Activated B cell treated with CpG ODN at 0.5 μM for 24 hours (primary cell): ENCODE measurements at regions of chrX and their contacts with region 1.

Region 1: GRCh38 chrX:48957827-48958634 is 624 bp upstream of the OTUD5 start:
- DNase-seq: peak; percentile 81
- ATAC-seq: peak; percentile 84
- H3K4me3 Mint-ChIP-seq: peak overlapping the region; percentile 98
- H3K27ac Mint-ChIP-seq: peak overlapping the region; percentile 100
- H3K4me1 Mint-ChIP-seq: peaks cover 69% of the 10 kb centered on the region
- H3K27me3 Mint-ChIP-seq: no peaks in the 10 kb centered on the region
- CTCF ChIP-seq: no peak

Region 2: GRCh38 chrX:48597353-48598264 is 360.4 kb before region 1 on chrX and contains the start of gene WDR13:
- CTCF ChIA-PET with region 1: no interaction called
- POLR2A ChIA-PET with region 1: interaction called, 3 read pairs
- intact Hi-C with region 1: loop called (anchors 5 kb)
- DNase-seq: peak; percentile 79
- ATAC-seq: peak; percentile 83
- H3K4me3 Mint-ChIP-seq: peak within 1 kb of the TSS; percentile 97
- H3K27ac Mint-ChIP-seq: peak within 1 kb of the TSS; percentile 99
- H3K4me1 Mint-ChIP-seq: peaks cover 7% of the 10 kb centered on the region
- H3K27me3 Mint-ChIP-seq: no peaks in the 10 kb centered on the region
- CTCF ChIP-seq: no peak
- total RNA-seq, gene WDR13: 73.4 and 75.8 TPM in 2 replicates

Region 3: GRCh38 chrX:48801280-48802088 is 156.5 kb before region 1 on chrX and contains the start of gene HDAC6:
- CTCF ChIA-PET with region 1: no interaction called
- POLR2A ChIA-PET with region 1: interaction called, 11 read pairs
- intact Hi-C with region 1: loop called (anchors 1 kb)
- DNase-seq: peak; percentile 85
- ATAC-seq: peak; percentile 80
- H3K4me3 Mint-ChIP-seq: peak within 1 kb of the TSS; percentile 94
- H3K27ac Mint-ChIP-seq: peak within 1 kb of the TSS; percentile 98
- H3K4me1 Mint-ChIP-seq: peaks cover 18% of the 10 kb centered on the region
- H3K27me3 Mint-ChIP-seq: no peaks in the 10 kb centered on the region
- CTCF ChIP-seq: no peak
- total RNA-seq, gene HDAC6: 139 and 144 TPM in 2 replicates

Region 4: DNA sequence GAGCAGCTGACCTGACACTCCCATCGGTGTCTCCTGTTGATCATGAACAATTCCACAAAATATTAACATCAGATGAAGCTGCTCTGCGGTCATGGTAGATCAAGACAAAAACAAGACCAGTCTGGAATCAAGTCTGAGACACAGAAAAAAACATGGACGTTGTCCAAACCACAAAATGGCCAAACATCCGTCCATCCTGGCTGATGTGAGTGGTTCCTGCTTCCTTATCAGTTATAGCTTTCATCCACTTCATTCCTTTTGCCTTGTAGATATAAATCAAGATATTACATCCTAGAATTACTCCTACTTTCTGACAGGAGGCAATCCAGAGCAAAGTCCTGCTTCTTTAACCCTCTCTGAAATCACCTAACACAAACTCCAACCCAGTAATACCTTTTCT is 93.8 kb before region 1 on chrX:
- CTCF ChIA-PET with region 1: no interaction called
- POLR2A ChIA-PET with region 1: no interaction called
- intact Hi-C with region 1: no loop called
- DNase-seq: no peak
- ATAC-seq: no peak
- H3K4me3 Mint-ChIP-seq: no peak overlapping the region
- H3K27ac Mint-ChIP-seq: no peak overlapping the region
- H3K4me1 Mint-ChIP-seq: no peaks in the 10 kb centered on the region
- H3K27me3 Mint-ChIP-seq: peaks cover 4% of the 10 kb centered on the region
- CTCF ChIP-seq: no peak

Region 5: DNA sequence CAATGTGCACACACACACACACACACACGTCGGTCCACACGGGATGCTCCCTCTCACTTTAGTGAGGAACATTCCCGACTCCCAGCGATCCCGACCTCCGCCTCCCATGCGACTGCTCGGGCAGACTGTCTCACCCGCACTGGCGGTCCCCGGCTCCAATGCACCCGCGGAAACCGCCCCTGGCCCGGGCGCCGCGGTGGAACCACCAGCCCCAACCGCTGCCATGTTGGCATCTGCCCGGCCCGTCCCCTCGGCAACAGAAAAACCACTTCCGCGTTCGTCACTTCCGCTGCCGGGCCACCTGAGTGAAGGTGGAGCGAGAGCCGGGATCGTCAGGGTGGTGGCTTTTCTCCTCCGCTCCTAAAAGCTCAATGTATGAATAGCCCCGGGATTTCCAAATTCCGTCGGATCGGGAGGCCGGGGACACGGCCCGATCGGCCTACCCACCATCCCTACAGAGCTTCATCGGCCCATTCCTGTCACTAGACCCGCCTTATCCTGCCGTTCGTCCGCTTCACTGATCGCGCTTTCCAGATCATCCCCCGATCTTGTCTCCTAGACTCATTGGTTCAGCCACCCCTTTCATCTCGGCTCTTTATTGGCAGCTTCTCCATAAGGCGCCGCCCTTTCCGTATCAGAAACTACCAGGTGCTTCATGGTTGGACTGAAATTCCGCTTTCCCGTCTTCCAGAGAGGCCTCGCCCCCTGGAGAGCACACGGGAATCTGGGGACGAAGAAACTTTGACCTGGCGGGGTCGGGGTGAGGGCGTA is 46.4 kb before region 1 on chrX and contains the start of gene SLC35A2:
- CTCF ChIA-PET with region 1: no interaction called
- POLR2A ChIA-PET with region 1: interaction called, 31 read pairs
- intact Hi-C with region 1: no loop called
- DNase-seq: peak; percentile 76
- ATAC-seq: peak; percentile 74
- H3K4me3 Mint-ChIP-seq: peak within 1 kb of the TSS; percentile 94
- H3K27ac Mint-ChIP-seq: peak within 1 kb of the TSS; percentile 94
- H3K4me1 Mint-ChIP-seq: peaks cover 55% of the 10 kb centered on the region
- H3K27me3 Mint-ChIP-seq: no peaks in the 10 kb centered on the region
- CTCF ChIP-seq: no peak
- total RNA-seq, gene SLC35A2: 17.3 and 18.4 TPM in 2 replicates

Region 6: GRCh38 chrX:48972220-48973167 is 14.5 kb after region 1 on chrX:
- CTCF ChIA-PET with region 1: interaction called, 3 read pairs
- POLR2A ChIA-PET with region 1: interaction called, 16 read pairs
- intact Hi-C with region 1: loop called (anchors 1 kb)
- DNase-seq: no peak
- ATAC-seq: peak; percentile 67
- H3K4me3 Mint-ChIP-seq: peak overlapping the region; percentile 57
- H3K27ac Mint-ChIP-seq: no peak overlapping the region
- H3K4me1 Mint-ChIP-seq: peaks cover 13% of the 10 kb centered on the region
- H3K27me3 Mint-ChIP-seq: no peaks in the 10 kb centered on the region
- CTCF ChIP-seq: no peak

Region 7: DNA sequence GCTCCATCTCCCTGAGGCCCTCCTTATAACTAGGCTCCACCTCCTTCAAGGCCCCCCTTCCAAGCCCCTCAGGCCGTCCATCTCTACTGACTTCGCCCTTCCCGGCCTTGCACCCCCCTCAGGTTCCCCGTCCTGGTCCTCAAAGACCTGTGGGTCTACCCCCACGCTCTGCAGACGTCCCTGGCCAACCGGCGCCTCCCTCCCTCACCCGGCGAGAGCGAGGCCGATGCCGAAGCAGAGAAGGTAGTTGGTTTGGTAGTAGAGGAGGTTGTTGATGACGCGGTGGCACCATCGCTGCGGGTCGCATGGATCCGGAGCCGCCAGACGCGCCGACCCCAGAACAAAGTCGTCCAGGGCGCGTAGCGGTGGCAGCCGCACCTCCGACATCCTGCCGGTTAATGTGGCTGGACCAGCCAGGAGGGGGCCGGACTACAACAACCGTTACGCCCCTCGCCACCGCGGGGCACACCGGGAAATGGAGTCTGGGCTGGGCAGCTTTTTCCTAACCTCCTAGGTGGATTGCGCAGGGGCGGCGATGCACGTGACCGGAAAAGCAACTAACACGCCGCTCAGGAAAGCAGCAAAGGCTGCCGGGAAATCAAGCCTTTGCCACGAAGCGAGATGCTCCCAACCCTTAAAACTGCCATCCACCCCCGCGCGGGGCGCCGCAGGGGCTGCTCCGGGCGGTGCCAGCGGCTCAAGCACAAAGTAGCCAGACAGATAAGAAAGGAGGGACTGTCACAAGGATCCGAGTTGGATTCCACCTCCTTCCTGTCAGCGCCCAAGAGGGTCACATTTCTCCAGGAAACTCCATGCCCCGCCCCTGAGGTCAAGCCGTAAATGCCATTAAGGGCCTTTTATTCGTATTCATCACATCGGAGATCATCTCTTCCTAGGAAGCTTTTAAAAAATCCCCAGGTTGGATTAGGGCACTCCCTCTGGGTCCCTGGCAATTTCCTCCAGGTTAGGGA is 115.9 kb after region 1 on chrX and contains the start of gene PRAF2:
- CTCF ChIA-PET with region 1: no interaction called
- POLR2A ChIA-PET with region 1: no interaction called
- intact Hi-C with region 1: loop called (anchors 1 kb)
- DNase-seq: peak; percentile 76
- ATAC-seq: peak; percentile 99
- H3K4me3 Mint-ChIP-seq: peak within 1 kb of the TSS; percentile 84
- H3K27ac Mint-ChIP-seq: peak within 1 kb of the TSS; percentile 72
- H3K4me1 Mint-ChIP-seq: peaks cover 23% of the 10 kb centered on the region
- H3K27me3 Mint-ChIP-seq: no peaks in the 10 kb centered on the region
- CTCF ChIP-seq: no peak
- total RNA-seq, gene PRAF2: 10.6 and 11.6 TPM in 2 replicates